ENCODE measurements at regions of chr19 and their contacts with region 1.

Region 1: DNA sequence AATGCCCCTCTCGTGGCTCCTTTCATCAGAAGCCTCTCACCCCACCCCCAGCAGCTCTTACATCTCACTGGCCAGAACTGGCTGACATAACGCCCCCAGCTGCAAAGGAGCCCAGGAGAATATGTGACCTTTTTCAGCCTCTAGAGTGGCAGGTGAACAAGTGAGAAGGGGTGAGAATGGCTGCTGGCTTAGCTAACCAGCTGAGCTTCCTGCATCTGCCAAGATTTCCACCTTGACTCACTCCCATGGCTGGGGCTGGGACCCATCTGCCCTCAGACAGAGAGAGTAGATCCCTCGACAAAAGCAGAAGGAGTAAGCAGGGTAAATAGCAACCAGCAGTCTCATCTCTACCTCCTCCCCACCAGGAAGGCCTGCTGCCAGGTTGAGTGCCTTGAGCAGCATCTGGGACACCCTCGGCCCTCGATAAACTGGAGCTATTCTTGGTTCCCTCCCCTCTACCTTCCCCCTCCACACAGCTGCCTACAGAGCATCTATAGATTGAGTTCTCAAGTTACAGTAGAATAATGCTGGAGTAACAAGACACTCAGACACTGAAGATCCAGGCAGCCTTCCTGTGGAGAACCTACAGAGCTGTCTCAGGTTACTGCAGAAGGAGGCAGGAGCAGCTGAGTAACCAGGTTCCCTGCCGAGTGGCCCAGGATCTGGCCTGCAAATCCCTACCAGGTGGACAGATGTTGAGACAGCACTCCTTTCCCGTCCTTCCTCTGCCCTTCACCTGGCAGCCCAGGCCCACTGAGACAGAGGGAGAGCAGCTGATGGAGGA is 15.5 kb downstream of the KASH5 start:
- DNase-seq: peak; percentile 81
- ATAC-seq: peak; percentile 98
- H3K4me3 Mint-ChIP-seq: peak overlapping the region; percentile 44
- H3K27ac Mint-ChIP-seq: peak overlapping the region; percentile 99
- H3K4me1 Mint-ChIP-seq: peaks cover 45% of the 10 kb centered on the region
- H3K27me3 Mint-ChIP-seq: peaks cover 4% of the 10 kb centered on the region; the same call in 1 of the 2 replicates
- CTCF ChIP-seq: no peak

Region 2: GRCh38 chr19:49309087-49309486 is 94.5 kb before region 1 on chr19:
- CTCF ChIA-PET with region 1: no interaction called
- POLR2A ChIA-PET with region 1: no interaction called
- DNase-seq: no peak
- ATAC-seq: no peak
- H3K4me3 Mint-ChIP-seq: no peak overlapping the region
- H3K27ac Mint-ChIP-seq: no peak overlapping the region
- H3K4me1 Mint-ChIP-seq: no peaks in the 10 kb centered on the region
- H3K27me3 Mint-ChIP-seq: peaks cover 2% of the 10 kb centered on the region
- CTCF ChIP-seq: no peak

Region 3: DNA sequence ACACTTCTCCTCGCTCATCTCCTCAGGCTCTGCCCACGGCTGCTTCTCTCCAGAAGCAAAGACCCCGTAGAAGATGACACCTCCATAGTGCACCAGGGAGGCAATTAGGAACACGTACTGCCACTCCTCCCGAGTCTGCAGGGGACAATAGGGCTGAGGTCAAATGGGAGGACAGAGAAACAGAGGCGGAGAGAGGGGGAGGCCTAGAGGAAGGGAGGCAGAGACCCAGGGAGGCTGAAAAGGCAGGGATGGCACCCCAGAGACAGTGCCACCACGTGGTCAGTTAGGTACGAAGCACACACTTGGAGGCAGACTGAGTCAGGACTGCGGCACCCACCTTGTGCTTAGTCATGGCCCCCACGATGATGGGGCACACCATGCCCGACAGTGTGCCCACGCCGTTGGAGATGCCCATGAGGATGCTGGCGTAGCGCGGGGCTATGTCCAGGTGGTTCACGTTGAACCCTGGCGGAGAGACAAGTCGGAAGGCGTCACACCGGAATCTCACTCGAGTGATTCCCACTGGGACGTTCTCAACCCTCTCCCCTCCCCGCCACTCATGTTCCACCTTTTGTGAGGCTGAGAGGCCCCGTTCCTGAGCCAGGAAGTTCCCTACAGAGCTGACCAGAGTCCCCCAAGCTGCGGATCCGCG is 27.2 kb after region 1 on chr19:
- CTCF ChIA-PET with region 1: interaction called, 12 read pairs
- POLR2A ChIA-PET with region 1: interaction called, 11 read pairs
- DNase-seq: no peak
- ATAC-seq: no peak
- H3K4me3 Mint-ChIP-seq: no peak overlapping the region
- H3K27ac Mint-ChIP-seq: no peak overlapping the region
- H3K4me1 Mint-ChIP-seq: peaks cover 58% of the 10 kb centered on the region
- H3K27me3 Mint-ChIP-seq: peaks cover 98% of the 10 kb centered on the region
- CTCF ChIP-seq: peak; percentile 21; the same call in 1 of the 2 replicates

Region 4: DNA sequence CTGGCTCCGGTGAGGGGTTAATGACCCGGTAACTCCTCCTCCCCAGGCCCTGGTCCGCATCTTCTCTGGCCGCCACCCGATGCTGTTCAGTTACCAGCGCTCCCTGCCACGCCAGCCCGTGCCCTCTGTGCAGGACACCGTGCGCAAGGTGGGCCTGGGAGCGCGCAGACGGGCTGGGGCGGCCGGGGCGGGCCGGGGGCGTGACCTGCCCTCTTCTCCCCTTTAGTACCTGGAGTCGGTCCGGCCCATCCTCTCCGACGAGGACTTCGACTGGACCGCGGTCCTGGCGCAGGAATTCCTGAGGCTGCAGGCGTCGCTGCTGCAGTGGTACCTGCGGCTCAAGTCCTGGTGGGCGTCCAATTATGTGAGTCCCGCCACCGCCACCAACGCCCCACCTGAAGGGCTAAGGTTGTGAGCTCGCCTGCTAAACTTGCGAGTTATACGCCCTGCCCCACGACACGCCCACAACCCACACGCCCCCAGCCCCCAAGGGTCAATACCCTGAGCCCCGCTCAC is 297.7 kb after region 1 on chr19:
- CTCF ChIA-PET with region 1: no interaction called
- POLR2A ChIA-PET with region 1: no interaction called
- DNase-seq: peak; percentile 34
- ATAC-seq: peak; percentile 64
- H3K4me3 Mint-ChIP-seq: no peak overlapping the region
- H3K27ac Mint-ChIP-seq: no peak overlapping the region
- H3K4me1 Mint-ChIP-seq: no peaks in the 10 kb centered on the region
- H3K27me3 Mint-ChIP-seq: no peaks in the 10 kb centered on the region
- CTCF ChIP-seq: no peak

Measured in WTC11 (cell line).